ENCODE measurements at regions of chr3 and their contacts with region 1.

Region 1: GRCh38 chr3:72100601-72101187 is 315.7 kb upstream of the PROK2 start:
- DNase-seq: peak; percentile 83 to 94 (median 90)
- ATAC-seq: peak; percentile 89
- H3K4me3 ChIP-seq: peak overlapping the region; percentile 56
- H3K4me3 Mint-ChIP-seq: peak overlapping the region; percentile 77 to 88 (median 83)
- H3K27ac ChIP-seq: peak overlapping the region; percentile 37
- H3K27ac Mint-ChIP-seq: peak overlapping the region; percentile 28 to 96 (median 83)
- H3K4me1 ChIP-seq: peaks cover 3 to 19% of the 10 kb centered on the region in 2 donors
- H3K4me1 Mint-ChIP-seq: peaks cover 24 to 38% (median 26%) of the 10 kb centered on the region in 7 donors
- H3K27me3 ChIP-seq: peaks cover 0 to 3% of the 10 kb centered on the region in 2 donors
- H3K27me3 Mint-ChIP-seq: peaks cover 0 to 7% (median 0%) of the 10 kb centered on the region in 5 donors

Region 2: DNA sequence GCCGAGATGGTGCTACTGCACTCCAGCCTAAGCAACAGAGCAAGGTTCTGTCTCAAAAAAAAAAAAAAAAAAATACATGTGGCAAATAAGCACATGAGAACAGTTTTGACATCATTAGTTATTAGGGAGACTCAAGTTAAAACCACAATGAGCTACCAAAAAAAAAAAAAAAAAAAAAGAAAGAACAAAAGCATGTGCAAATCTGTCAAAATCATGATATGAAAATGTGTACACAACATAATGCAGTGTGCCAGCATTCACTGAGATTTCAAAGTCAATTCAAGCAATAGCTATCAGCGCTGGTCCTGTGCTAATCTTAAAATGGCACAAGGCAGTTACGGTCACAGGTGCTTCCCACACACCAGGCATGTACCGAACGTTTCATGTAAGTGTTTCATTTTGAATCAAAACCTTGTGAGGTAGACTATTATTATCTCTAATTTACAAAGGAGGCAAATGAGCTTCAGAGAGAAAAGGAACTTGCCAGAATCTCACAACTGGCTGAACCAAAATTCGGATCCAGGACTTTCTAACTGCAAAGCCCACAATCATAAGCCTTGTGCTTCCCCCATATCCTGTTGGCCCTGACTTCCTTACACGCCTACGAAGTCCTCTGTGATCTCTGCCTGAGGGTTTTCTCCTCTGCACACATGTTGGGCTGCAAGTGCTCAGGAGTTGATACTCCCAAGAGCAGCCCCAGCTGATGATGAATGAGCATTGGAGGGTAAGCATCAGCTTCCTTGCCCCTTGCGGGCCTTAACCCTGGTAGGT is 115.7 kb before region 1 on chr3:
- CTCF ChIA-PET with region 1: no interaction called
- POLR2A ChIA-PET with region 1: no interaction called
- intact Hi-C with region 1: loop called in 1 of 2 experiments (anchors 5 kb)
- DNase-seq: peak in 4 of 9 donors; percentile 12 to 28 (median 20)
- ATAC-seq: peak; percentile 44
- H3K4me3 ChIP-seq: peak overlapping the region; percentile 13
- H3K4me3 Mint-ChIP-seq: peak overlapping the region in 9 of 10 donors; percentile 58 to 78 (median 70)
- H3K27ac ChIP-seq: no peak overlapping the region
- H3K27ac Mint-ChIP-seq: peak overlapping the region in 5 of 9 donors; percentile 1 to 78 (median 40)
- H3K4me1 ChIP-seq: peaks cover 0 to 10% of the 10 kb centered on the region in 2 donors
- H3K4me1 Mint-ChIP-seq: peaks cover 6 to 53% (median 13%) of the 10 kb centered on the region in 7 donors
- H3K27me3 ChIP-seq: no peaks in the 10 kb centered on the region
- H3K27me3 Mint-ChIP-seq: no peaks in the 10 kb centered on the region

Region 3: DNA sequence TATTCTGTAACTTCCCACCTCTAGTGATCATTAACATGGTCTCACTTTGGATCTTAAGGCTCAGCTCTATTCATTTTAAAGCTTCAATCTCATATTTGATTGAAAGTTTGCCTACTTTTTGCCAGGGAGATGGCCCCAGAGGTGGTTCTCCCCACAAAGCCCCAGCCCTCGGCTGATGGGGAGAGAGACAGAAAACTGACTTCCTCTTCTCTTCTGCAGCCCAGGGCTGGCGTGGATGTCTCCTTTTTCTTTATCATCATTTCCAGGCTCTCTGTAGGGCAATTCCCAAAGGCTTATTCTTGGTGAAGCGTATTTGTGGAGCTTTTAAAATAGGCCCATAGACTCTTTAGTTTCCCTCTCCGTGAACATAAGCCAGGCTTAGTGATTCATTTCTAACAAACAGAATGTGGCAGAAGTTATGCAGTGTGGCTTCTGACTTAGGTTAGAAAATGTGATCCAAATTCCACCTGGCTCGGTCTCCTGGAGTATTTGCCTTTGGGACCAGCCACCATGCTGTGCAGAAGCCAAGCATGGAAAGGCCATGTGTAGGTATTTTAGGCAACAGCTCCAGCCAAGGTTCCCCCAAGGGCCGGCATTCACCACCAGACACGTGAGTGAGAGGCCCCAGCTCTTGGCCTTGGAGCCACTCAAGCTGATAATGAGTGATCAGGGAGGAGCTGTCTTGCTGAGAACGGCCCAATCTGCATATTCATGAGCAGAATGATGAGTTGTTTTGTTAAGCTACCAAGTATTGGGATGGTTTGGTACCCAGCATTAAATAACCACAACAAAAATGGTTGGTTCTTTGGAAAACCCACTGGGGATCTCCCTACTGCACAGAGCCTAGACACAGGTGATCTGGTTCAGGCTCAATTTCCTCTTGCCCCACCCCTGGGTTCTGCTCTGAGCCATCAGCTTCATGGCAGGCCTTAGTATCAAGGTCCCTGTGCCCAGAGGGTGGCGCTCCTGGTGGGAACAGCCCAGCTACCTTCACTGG is 37.5 kb after region 1 on chr3:
- CTCF ChIA-PET with region 1: no interaction called
- POLR2A ChIA-PET with region 1: no interaction called
- intact Hi-C with region 1: loop called in 1 of 2 experiments (anchors 2 kb)
- DNase-seq: peak in 1 of 9 donors; percentile 41
- ATAC-seq: no peak
- H3K4me3 ChIP-seq: no peak overlapping the region
- H3K4me3 Mint-ChIP-seq: no peak overlapping the region
- H3K27ac ChIP-seq: no peak overlapping the region
- H3K27ac Mint-ChIP-seq: peak overlapping the region in 1 of 9 donors; percentile 29
- H3K4me1 ChIP-seq: peaks cover 0 to 13% of the 10 kb centered on the region in 2 donors
- H3K4me1 Mint-ChIP-seq: peaks cover 8 to 61% (median 17%) of the 10 kb centered on the region in 7 donors
- H3K27me3 ChIP-seq: no peaks in the 10 kb centered on the region
- H3K27me3 Mint-ChIP-seq: peaks cover 0 to 3% (median 0%) of the 10 kb centered on the region in 5 donors